AG04449 (cell line): ENCODE measurements at regions of chr2 and their contacts with region 1.

Region 1: GRCh38 chr2:102806250-102806837 is 44.5 kb downstream of the TMEM182 start:
- DNase-seq: peak; percentile 12
- H3K4me3 ChIP-seq: no peak overlapping the region
- CTCF ChIP-seq: peak; percentile 88

Region 2: GRCh38 chr2:102796337-102796736 is 10.0 kb before region 1 on chr2:
- CTCF ChIA-PET with region 1: interaction called, 11 read pairs
- POLR2A ChIA-PET with region 1: no interaction called
- DNase-seq: no peak
- H3K4me3 ChIP-seq: no peak overlapping the region
- CTCF ChIP-seq: no peak